Activated CD8-positive, alpha-beta T cell treated with anti-CD3 and anti-CD28 coated beads, Interleukin-2, amount 10 ng/mL, durations not matched to agents 7 days and 5 days (primary cell): ENCODE measurements at regions of chr1 and their contacts with region 1.

Region 1: GRCh38 chr1:112706908-112707663 is at the start of gene RHOC:
- DNase-seq: peak; percentile 72
- ATAC-seq: peak; percentile 75
- H3K4me3 Mint-ChIP-seq: peak within 1 kb of the TSS; percentile 79
- H3K27ac Mint-ChIP-seq: peak within 1 kb of the TSS; percentile 92
- H3K4me1 Mint-ChIP-seq: peaks cover 44% of the 10 kb centered on the region
- H3K27me3 Mint-ChIP-seq: peaks cover 25% of the 10 kb centered on the region
- total RNA-seq, gene RHOC: 85.6 to 93.8 TPM

Region 2: DNA sequence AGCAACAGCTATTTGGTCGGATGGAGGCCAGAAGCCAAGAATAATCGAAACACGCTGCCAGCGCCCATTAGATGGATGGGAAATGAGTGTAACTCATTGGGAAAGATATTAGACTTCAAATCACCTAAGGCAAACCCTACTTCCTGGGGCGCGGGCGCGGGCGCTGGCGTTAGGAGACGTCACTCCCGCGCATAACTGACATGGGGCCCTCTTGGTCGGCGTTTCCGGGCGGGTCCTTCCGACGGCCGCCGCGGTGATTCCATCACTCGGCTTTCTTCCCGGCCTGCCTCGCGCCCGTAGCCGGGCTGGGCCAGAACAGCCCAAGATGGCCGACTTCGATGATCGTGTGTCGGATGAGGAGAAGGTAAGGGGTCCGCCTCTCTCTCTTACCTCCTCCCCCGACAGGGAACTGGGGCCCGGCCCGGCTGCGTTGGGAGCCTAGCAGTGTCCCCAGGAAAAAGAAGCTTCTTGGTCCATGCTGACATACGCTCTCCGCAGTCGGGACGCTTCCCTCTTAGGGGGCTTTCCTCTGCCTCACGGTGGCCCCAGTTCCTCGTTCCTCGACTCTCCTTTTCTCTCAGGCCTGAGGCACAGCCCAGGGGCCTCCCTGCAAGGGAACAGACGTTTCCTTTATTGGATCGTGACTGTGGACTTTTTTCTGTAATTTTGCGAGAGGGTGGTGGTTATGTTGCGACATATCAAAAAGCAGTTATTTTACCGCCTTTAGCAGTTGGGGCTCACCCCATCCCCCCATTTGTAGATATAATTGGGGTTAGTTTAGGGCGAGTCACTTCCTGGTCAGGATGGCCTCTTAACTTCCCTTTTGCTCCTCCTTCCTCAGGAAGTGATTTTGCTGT is 87.3 kb before region 1 on chr1 and contains the start of gene CAPZA1:
- CTCF ChIA-PET with region 1: interaction called, 4 read pairs
- POLR2A ChIA-PET with region 1: interaction called, 36 read pairs
- DNase-seq: peak; percentile 95
- ATAC-seq: peak; percentile 80
- H3K4me3 Mint-ChIP-seq: peak within 1 kb of the TSS; percentile 100
- H3K27ac Mint-ChIP-seq: peak within 1 kb of the TSS; percentile 100
- H3K4me1 Mint-ChIP-seq: peaks cover 36% of the 10 kb centered on the region
- H3K27me3 Mint-ChIP-seq: no peaks in the 10 kb centered on the region
- total RNA-seq, gene CAPZA1: 279 to 280 TPM